Left cardiac atrium (tissue), 4 donors: ENCODE measurements at regions of chrX and their contacts with region 1.

Region 1: DNA sequence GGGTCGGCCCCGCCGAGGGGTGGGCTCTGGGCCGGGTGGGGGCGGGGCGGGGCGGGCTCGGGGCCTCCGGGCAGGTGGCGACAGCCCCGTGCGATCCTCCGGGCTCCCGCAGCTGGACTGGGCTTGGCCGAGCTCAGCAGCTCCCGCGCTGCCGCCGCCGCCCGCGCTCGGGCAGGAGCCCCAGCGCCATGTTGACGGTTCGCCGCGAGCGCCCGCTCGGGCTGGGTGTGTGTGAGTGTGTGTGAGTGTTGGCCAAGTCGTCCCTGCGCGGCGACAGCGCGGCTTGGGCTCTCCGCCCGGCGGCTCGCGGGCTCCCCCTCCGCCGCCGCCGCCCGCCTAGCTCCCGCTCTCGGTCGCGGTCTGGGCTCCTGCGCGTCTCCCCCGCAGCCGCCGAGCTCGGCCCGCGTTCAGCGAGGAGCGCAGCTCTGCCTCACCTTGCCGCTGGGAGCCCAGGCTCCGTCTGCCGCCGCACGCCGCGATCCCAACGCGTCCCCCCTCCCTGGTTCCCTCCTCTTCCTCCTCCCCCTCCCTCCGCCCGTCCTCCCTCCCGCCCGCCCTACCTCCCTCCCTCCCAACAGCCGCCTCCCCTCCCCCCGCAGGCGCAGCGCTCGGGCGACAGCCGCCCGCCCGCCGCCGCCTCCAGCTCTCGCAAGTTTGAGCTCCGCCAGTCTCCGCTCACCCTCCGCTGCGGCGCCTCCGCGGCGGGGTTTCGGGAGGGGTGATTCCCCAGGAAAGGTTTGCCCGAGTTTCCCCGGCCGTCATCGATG is at the start of gene BCOR:
- DNase-seq: peak; percentile 78
- ATAC-seq: peak; percentile 51 to 55
- total RNA-seq, gene BCOR: 10.8 to 21.6 TPM

Region 2: DNA sequence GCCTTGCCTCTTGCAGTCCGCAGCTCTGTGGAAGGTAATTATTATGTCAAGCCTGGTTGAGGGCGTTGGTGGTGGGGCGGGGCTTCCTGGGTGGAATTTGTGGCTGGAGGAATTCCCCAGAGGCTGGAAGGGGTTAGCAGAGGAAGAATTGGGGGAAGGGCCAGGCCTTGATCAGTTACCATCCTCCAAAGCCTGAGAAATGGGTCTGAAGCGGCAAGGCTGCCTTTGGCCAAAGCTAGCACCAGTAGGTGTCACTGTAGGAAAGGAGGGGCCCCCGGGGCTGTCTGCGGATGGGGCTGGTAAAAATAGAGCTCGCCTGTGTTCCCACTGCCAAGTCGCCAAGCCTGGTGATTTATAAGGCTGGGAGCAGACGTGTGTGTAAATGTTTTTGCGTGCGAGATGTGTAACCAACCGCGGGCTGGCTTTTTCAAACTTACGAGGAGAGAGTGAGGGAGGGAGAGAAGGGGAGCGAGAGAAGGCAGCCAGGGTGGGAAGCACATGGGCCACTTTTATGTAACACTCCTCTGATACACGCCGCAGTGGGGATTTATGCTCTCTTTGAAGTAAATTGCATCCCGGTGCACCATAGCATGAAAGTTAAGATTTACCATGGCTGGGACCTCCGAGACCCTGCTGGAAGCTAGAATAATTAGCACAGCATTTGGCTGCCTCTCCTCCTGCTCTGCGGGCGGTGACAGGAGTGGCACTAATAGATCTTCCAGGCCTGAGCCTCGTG is 366.9 kb before region 1 on chrX:
- intact Hi-C with region 1: loop called in 1 of 2 experiments (anchors 10 kb)
- DNase-seq: peak; percentile 80
- ATAC-seq: peak; percentile 80 to 84

Region 3: GRCh38 chrX:39814391-39814790 is 283.3 kb before region 1 on chrX:
- intact Hi-C with region 1: loop called in 1 of 2 experiments (anchors 10 kb)
- DNase-seq: peak; percentile 37
- ATAC-seq: peak in 1 of 2 donors; percentile 10